Activated naive CD4-positive, alpha-beta T cell treated with anti-CD3 and anti-CD28 coated beads, Interleukin-2, amount 10 ng/mL, durations not matched to agents 7 days and 5 days (primary cell): ENCODE measurements at regions of chr12 and their contacts with region 1.

Region 1: DNA sequence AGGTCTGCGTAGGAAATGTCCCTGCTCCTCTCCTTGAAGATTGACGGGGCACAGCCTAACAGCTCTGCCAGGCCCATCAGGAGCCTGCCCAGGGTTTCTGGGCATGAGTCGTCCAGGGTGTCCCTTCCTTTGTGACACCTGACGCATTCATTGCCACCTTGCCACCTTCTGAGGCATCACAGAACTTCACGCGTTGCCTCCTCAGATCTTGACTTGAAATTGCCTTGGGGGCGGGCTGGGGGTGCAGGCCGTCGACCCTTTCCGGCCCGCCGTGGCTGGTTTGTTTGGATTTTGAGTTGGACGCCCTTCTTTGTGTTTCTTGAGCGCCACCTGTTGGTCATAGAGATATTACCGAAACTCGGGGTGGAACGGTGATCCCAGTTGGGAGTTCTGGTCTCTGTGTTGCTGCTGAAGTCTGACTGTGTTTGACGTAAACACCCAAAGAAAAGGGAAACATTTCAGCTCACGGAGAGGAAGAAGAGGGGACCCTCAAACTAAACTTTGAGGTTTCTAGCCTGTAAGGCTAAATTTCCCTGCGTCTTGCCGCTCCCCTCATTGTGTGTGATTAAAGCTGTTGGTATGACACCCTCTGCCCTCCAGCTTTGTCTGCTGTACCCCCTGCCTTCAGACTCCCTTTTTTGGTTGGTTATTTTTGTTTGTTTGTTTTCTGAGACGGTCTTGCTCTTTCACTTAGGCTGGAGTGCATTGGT is 44.6 kb downstream of the MLXIP start:
- DNase-seq: peak; percentile 81
- H3K4me3 Mint-ChIP-seq: no peak overlapping the region
- H3K27ac Mint-ChIP-seq: peak overlapping the region; percentile 61
- H3K4me1 Mint-ChIP-seq: peaks cover 32% of the 10 kb centered on the region
- H3K27me3 Mint-ChIP-seq: no peaks in the 10 kb centered on the region

Region 2: DNA sequence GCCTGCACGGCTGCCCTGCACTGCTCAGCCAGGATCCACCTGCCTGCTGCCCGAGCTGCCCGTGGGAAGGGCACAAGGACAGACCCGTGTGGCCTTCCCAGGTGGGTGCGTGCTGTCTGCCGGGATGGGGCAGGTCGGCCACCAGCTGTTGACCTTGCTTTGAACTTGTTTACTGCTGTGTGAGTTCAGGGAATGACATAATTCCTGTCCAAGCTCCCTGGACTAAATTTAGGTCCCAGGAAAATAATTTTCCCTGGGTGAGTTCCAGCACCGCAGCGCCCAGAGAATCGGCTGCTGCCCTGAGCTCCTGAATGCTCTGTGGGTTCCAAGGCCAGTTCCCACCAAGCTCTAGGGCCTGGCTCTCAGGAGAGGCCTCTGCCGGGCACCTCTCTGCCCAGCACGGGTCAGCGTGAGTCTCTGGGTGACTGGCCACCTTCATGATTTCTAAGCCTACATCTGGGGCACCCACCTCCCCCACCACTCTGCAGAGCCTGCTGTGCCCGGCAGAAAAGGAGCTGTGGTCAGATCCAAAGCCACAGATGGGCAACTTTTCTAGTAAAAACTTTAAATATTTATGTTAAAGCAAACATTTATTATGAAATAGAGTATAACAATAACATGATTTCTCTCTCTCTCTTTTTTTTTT is 71.9 kb before region 1 on chr12:
- CTCF ChIA-PET with region 1: interaction called, 103 read pairs
- DNase-seq: no peak
- H3K4me3 Mint-ChIP-seq: no peak overlapping the region
- H3K27ac Mint-ChIP-seq: no peak overlapping the region
- H3K4me1 Mint-ChIP-seq: peaks cover 6% of the 10 kb centered on the region
- H3K27me3 Mint-ChIP-seq: no peaks in the 10 kb centered on the region

Region 3: DNA sequence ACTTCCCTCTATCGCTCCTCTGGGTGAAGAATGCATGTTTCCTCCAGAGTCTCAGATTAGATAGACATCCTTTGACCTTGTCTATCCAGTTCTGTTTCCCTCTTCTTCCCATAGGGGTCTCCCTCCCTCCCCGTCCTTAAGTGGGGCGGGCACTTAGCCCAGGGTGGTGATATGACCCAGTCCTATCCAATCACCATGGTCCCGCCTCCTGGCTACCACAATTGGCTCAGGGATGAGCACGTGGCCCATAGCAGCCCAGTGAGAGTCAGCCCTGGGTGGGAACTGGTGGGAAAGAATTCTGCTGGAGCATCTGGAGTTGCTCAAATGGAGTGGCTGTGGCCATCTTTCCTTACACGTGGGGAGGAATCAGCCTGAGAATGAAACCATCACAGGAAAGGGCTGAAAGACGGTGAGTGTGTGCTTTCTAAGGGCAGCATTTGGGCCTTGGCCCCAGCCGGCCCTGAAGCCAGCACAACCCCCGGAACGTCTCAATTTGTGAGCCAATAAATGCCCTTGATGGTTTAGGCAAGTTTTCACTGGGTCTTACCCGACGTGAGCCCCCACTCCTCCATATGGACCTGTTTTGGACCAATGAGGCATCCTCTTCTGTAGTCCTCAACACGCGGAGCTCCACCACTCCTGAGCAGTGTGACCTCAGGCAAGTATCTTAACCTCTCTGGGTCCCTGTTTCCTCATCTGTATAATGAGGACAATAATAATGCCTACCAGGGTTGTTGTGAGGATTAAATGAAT is 59.0 kb before region 1 on chr12:
- CTCF ChIA-PET with region 1: interaction called, 46 read pairs
- DNase-seq: peak; percentile 57
- H3K4me3 Mint-ChIP-seq: no peak overlapping the region
- H3K27ac Mint-ChIP-seq: no peak overlapping the region
- H3K4me1 Mint-ChIP-seq: peaks cover 49% of the 10 kb centered on the region
- H3K27me3 Mint-ChIP-seq: peaks cover 5% of the 10 kb centered on the region

Region 4: GRCh38 chr12:122078141-122079032 is 44.8 kb before region 1 on chr12 and contains the start of gene MLXIP:
- CTCF ChIA-PET with region 1: interaction called, 39 read pairs
- DNase-seq: peak; percentile 92
- H3K4me3 Mint-ChIP-seq: peak within 1 kb of the TSS; percentile 99
- H3K27ac Mint-ChIP-seq: peak within 1 kb of the TSS; percentile 91
- H3K4me1 Mint-ChIP-seq: peaks cover 49% of the 10 kb centered on the region
- H3K27me3 Mint-ChIP-seq: peaks cover 3% of the 10 kb centered on the region

Region 5: GRCh38 chr12:122087431-122088178 is 35.6 kb before region 1 on chr12:
- CTCF ChIA-PET with region 1: interaction called, 39 read pairs
- DNase-seq: no peak
- H3K4me3 Mint-ChIP-seq: no peak overlapping the region
- H3K27ac Mint-ChIP-seq: no peak overlapping the region
- H3K4me1 Mint-ChIP-seq: peaks cover 70% of the 10 kb centered on the region
- H3K27me3 Mint-ChIP-seq: no peaks in the 10 kb centered on the region

Region 6: DNA sequence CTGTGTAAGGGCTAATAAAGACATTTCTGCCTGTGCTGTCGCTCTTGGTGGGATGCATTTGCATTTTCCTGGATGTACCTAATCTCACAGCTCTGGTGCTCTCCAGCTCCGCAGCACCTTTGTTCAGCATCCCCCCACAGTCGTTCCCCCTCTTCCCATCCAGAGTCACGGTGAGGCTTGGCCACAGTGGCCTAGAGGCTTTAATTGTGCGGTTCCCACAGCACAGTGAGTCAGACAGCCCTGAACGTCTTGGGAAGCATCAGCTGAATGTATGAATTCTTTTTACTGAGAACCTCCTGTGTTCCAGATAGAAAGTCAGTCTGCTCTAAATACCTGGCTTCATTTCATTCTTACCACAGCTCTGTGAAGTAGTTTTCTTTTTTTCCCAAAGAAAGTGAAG is 15.9 kb before region 1 on chr12:
- CTCF ChIA-PET with region 1: interaction called, 10 read pairs
- DNase-seq: no peak
- H3K4me3 Mint-ChIP-seq: no peak overlapping the region
- H3K27ac Mint-ChIP-seq: no peak overlapping the region
- H3K4me1 Mint-ChIP-seq: peaks cover 69% of the 10 kb centered on the region
- H3K27me3 Mint-ChIP-seq: no peaks in the 10 kb centered on the region

Region 7: GRCh38 chr12:122174155-122174845 is 51.1 kb after region 1 on chr12 and contains the start of gene IL31:
- CTCF ChIA-PET with region 1: no interaction called
- DNase-seq: no peak
- H3K4me3 Mint-ChIP-seq: no peak within 1 kb of the TSS
- H3K27ac Mint-ChIP-seq: no peak within 1 kb of the TSS
- H3K4me1 Mint-ChIP-seq: no peaks in the 10 kb centered on the region
- H3K27me3 Mint-ChIP-seq: peaks cover 30% of the 10 kb centered on the region

Region 8: DNA sequence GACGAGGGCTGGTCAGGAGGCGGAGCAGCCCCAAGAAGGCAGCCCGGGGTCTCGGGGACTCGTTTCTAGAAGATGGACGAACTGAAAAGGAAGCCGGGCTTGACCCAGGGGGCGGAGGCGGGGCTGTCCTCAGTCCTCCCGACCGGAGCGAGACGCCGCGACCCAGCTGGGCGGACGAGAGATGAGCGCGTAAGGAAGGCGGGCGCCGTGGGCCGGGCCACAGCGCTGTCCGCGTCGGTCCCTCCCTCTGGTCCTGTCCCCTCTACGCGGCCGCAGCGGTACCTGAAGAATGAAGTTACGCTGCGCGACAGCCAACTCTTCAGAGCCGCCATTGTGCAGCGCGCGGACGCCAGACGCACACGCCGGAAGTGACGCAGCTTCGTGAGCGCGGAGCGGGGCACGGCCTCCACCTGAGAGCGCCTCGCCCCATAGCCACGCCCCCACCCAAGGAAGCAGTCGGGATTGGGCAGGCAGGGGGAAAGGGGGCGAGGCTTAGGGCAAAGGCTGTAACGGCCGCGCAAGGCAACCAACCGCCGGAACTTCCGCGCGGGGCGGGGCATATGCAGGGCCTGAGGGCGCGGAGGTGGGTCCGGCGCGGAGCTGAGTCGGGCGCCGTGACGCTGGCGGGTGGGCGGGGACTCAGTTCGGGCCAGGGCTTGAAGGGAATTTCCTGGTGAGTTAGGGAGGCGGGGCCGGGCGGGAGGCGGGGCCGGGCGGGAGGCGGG is 102.6 kb after region 1 on chr12 and contains the start of gene DIABLO:
- CTCF ChIA-PET with region 1: no interaction called
- DNase-seq: peak; percentile 100
- H3K4me3 Mint-ChIP-seq: peak within 1 kb of the TSS; percentile 84
- H3K27ac Mint-ChIP-seq: peak within 1 kb of the TSS; percentile 94
- H3K4me1 Mint-ChIP-seq: peaks cover 42% of the 10 kb centered on the region
- H3K27me3 Mint-ChIP-seq: no peaks in the 10 kb centered on the region